Endothelial cell of umbilical vein (primary cell): ENCODE measurements at regions of chr12 and their contacts with region 1.

Region 1: GRCh38 chr12:1650260-1650977 is 21.4 kb downstream of the WNT5B start:
- DNase-seq: no peak
- H3K4me3 ChIP-seq: no peak overlapping the region
- H3K27ac ChIP-seq: no peak overlapping the region
- H3K4me1 ChIP-seq: no peaks in the 10 kb centered on the region
- H3K27me3 ChIP-seq: peaks cover 24 to 27% of the 10 kb centered on the region in 2 experiments
- CTCF ChIP-seq: no peak
- POLR2A ChIP-seq: no peak

Region 2: DNA sequence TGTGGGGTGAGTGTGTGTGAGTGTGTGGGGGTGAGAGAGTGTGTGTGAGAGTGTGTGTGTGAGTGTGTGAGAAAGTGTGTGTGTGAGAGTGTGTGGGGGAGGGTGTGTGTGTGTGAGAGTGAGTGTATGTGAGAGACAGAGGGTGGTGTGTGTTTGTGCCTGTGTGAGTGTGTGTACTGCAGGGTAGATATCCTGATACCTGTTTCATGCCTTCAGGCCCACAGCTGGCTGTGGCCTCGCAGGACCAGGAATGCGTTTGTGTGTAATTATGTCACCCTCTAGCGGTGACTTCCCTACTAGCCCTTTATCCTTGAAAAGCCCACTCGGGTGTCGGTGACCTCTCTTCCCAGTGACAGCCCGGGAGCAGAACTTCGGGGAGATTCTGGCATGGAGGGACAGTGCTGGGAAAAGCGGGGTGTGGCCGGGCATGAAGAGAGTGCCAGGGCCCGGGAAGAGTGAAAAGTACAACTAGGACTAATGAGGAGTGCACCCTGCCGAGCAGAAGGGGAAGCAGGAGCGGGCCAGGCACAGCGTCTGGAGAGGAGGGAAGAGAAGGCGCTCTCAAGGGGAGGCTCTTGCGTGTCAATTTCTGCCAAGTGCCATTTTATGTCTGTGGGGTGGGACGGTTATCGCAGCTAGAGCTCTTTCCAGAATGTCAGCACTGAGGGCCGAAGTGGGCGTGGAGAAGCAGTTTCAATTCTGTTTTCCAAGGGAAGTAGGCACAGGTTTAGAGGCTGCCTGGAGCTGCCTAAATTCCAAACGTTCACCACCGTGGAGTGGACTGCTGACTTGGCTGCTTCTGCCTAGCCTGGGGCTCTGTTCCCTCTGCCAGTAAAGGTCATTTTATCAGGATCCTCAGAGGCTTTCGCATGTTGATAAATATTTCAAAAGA is 45.0 kb before region 1 on chr12:
- CTCF ChIA-PET with region 1: no interaction called
- POLR2A ChIA-PET with region 1: no interaction called
- dilution Hi-C with region 1: no loop called
- intact Hi-C with region 1: no loop called
- DNase-seq: peak; percentile 81
- H3K4me3 ChIP-seq: peak overlapping the region in 2 of 3 experiments; percentile 27 to 28
- H3K27ac ChIP-seq: peak overlapping the region; percentile 39
- H3K4me1 ChIP-seq: peaks cover 9% of the 10 kb centered on the region
- H3K27me3 ChIP-seq: no peaks in the 10 kb centered on the region
- CTCF ChIP-seq: peak; percentile 73 to 85
- POLR2A ChIP-seq: no peak

Region 3: DNA sequence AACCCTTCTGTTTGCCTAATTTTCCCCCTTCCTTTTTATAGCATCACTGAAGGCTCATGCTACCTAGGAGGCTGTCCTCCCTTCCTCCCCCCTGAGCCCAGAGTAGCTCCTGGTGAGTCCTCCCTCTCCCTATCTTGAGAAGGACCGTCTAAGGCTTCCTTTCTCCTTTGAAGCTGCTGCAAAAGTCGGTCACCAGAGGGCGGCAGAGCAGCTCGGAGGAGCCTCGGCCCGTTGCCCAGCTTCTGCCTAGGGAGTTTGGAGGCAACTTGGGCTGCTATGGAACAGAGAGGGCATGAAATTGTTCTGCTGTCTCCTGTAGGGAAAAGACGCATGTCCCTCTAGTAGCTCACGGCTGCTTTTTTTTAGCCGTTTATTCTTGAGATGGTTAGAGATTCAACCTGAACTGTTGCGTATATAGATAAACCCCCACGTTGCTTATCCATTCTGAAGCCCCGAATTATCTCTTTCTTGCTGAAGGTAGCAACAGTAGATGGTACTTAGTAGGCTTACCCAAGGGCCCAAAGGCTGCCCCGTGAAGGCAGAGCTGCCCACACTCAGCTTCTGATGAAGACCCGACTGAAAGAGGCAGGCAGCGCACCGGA is 15.7 kb before region 1 on chr12:
- CTCF ChIA-PET with region 1: interaction called, 42 read pairs
- POLR2A ChIA-PET with region 1: interaction called, 3 read pairs
- dilution Hi-C with region 1: no loop called
- intact Hi-C with region 1: no loop called
- DNase-seq: peak; percentile 65
- H3K4me3 ChIP-seq: no peak overlapping the region
- H3K27ac ChIP-seq: no peak overlapping the region
- H3K4me1 ChIP-seq: peaks cover 5% of the 10 kb centered on the region
- H3K27me3 ChIP-seq: peaks cover 36 to 42% of the 10 kb centered on the region in 2 experiments
- CTCF ChIP-seq: peak; percentile 85 to 87
- POLR2A ChIP-seq: no peak

Region 4: DNA sequence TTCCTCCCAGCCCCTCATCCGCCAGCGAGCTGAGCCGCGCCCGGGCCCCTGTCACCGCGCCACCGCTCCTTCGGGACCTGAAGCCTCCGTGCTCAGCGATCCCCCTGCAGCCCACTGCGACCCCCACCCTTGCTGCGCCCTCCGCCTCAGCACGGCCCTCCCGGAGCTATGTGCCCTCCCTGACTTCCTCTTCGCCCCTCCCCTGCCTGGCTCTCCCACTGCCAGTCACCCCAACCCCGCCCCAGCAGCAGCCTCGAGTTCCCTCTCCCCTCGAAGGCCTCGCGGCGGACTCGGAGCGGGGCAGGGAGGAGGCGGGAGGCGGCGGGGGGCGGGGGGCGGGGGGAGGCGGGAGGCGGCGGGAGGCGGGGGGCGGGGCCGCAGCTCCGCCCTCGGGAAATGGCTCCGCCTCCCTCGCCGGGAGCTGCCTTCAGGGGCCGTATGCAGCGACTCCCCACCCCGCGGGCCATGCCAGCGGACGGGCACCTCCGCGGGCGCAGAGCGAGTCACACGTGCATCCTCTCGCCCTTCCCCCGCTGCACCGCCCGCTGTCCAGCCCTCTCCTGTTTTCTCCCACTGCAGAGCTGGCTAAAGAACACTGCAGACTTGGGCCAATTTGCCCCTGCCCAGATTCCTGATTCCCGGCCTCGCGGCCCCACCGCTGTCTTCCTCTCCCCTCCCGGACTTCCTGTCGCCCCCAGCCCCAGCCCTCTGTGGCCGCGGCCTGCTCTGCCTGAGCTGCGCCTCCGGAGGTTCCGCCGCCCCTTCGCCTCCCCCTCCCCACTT is 11.3 kb after region 1 on chr12:
- CTCF ChIA-PET with region 1: interaction called, 18 read pairs
- POLR2A ChIA-PET with region 1: no interaction called
- dilution Hi-C with region 1: no loop called
- intact Hi-C with region 1: no loop called
- DNase-seq: peak; percentile 90
- H3K4me3 ChIP-seq: peak overlapping the region in 1 of 3 experiments; percentile 37
- H3K27ac ChIP-seq: no peak overlapping the region
- H3K4me1 ChIP-seq: peaks cover 13% of the 10 kb centered on the region
- H3K27me3 ChIP-seq: no peaks in the 10 kb centered on the region
- CTCF ChIP-seq: no peak
- POLR2A ChIP-seq: no peak

Region 5: DNA sequence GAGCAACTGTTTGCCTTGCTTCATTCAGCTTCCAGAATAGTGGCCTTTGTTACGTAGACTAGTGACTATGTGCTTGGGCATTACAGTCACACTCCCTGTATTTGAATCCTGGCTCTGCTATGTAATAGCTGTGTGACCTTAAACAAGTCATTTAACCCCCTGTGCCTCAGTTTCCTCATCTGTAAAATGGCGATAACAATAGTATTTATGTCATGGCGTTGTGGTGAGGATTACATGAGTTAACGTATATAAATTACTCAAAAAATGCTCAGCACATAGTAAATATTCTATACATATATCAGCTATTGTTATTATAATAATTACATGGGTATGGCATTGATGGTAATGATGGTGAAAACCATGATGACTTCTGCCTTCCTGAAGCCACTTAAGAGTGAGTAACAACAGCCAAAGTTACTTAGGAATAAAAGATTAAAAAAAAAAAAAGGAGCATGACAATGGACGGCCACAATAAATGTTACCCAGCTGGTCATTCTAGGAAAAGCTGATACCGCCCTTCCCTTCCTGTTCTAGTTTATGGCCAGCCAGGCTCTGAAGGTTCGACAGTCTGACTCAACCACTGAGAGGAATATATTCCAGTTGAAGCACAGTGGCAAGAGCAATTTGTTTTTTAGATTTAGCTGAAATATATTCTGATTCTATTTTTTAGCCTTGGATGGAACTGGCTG is 30.5 kb after region 1 on chr12:
- CTCF ChIA-PET with region 1: interaction called, 18 read pairs
- POLR2A ChIA-PET with region 1: no interaction called
- dilution Hi-C with region 1: no loop called
- intact Hi-C with region 1: no loop called
- DNase-seq: peak; percentile 95
- H3K4me3 ChIP-seq: no peak overlapping the region
- H3K27ac ChIP-seq: peak overlapping the region; percentile 76
- H3K4me1 ChIP-seq: peaks cover 15% of the 10 kb centered on the region
- H3K27me3 ChIP-seq: peaks cover 0 to 2% of the 10 kb centered on the region in 2 experiments
- CTCF ChIP-seq: no peak
- POLR2A ChIP-seq: no peak

Region 6: DNA sequence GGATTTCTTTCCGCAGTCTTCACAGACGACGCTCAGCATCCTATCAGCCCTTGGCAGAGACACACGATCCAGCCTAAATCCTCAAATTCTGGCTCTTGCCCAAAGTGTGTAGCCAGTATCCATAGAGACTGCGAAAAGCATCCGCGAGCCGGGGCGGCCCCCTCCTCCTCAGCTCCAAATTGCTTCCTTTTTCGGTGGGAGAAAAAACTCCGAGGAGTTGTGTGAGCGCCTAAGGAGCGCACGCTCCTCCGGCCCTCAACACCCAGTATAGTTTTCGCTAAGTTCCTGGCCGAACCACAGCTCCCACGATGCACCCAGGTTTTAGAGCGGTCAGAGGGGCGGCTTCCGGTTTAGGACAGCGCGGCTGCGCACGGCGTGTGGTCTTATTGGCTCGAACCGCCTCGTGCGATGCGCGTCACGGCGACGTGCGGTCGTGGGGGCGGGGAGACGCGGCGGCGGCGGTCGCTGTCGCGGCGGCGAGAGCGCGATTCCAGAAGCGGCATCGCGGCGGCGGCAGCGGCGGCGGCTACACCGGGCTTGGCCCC is 40.2 kb after region 1 on chr12 and contains the start of gene ADIPOR2:
- CTCF ChIA-PET with region 1: interaction called, 14 read pairs
- POLR2A ChIA-PET with region 1: no interaction called
- dilution Hi-C with region 1: no loop called
- intact Hi-C with region 1: loop called (anchors 2 kb)
- DNase-seq: peak; percentile 94
- H3K4me3 ChIP-seq: peak within 1 kb of the TSS; percentile 72 to 95 (median 90)
- H3K27ac ChIP-seq: peak within 1 kb of the TSS; percentile 93
- H3K4me1 ChIP-seq: peaks cover 14% of the 10 kb centered on the region
- H3K27me3 ChIP-seq: no peaks in the 10 kb centered on the region
- CTCF ChIP-seq: no peak
- POLR2A ChIP-seq: peak; percentile 91
- total RNA-seq, gene ADIPOR2: 57.3 and 59.4 TPM in 2 replicates

Region 7: DNA sequence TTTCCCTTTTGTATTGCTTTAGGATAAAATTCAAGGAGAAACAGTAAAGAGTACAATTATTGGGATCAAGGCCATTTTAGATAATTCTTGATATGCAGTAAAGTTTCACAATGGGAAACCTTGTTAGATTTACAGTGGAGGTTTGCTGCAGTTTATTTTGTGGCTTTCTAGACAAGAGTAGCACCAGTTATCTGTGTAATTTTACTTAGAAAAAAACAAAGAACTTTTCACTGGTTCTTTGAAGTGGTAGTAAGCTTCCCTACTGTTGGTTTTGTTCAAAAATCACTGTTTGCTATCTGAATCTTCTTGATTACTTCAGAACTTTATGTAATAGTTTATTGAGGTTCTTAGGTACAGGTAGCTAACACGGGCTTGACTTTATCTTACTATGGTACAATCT is 82.5 kb after region 1 on chr12:
- CTCF ChIA-PET with region 1: no interaction called
- POLR2A ChIA-PET with region 1: no interaction called
- dilution Hi-C with region 1: no loop called
- intact Hi-C with region 1: no loop called
- DNase-seq: no peak
- H3K4me3 ChIP-seq: no peak overlapping the region
- H3K27ac ChIP-seq: no peak overlapping the region
- H3K4me1 ChIP-seq: no peaks in the 10 kb centered on the region
- H3K27me3 ChIP-seq: no peaks in the 10 kb centered on the region
- CTCF ChIP-seq: no peak
- POLR2A ChIP-seq: no peak

Region 8: GRCh38 chr12:1776170-1776948 is 125.9 kb after region 1 on chr12:
- CTCF ChIA-PET with region 1: interaction called, 13 read pairs
- POLR2A ChIA-PET with region 1: no interaction called
- dilution Hi-C with region 1: no loop called
- intact Hi-C with region 1: no loop called
- DNase-seq: no peak
- H3K4me3 ChIP-seq: no peak overlapping the region
- H3K27ac ChIP-seq: no peak overlapping the region
- H3K4me1 ChIP-seq: peaks cover 9% of the 10 kb centered on the region
- H3K27me3 ChIP-seq: no peaks in the 10 kb centered on the region
- CTCF ChIP-seq: no peak
- POLR2A ChIP-seq: no peak

Region 9: DNA sequence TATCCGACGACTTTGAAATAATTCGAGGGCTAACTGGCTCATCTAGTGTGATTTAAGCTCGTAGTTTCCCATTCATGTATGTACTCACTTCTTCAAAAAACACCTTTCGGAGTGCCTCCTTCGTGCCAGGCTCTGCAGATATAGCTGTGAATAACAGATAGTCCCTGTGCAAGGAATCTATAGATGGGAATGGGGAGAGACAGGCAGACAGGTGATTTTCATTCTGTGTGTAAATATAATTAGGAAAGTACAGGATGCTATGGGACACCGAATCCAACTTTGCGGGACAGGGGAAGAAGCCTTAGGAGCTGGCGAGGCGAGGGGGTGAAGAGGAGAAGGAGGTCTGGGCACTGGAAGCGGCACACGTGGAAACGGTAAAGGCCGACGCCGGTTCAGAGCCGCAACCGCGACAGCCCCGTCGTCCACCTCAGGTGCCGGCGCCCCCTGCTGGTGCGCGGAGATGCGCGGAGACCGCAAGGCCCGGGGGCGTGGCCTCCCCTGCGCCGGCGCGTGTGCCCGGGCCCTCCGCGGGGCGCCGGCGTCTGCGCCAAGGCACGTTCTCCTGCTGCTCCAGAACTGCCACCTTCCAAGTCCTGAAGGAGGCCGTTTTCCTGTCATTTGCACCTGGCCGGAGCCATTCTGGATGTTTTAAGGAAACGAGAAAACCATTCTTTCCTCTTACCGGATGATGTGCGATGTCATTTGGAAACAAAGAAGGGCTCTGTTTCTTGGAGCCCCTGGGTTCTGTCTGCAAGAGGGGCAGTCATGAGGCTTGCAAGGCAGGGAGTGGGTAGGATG is 384.4 kb after region 1 on chr12:
- CTCF ChIA-PET with region 1: no interaction called
- POLR2A ChIA-PET with region 1: no interaction called
- dilution Hi-C with region 1: no loop called
- intact Hi-C with region 1: loop called (anchors 5 kb)
- DNase-seq: peak; percentile 69
- H3K4me3 ChIP-seq: no peak overlapping the region
- H3K27ac ChIP-seq: no peak overlapping the region
- H3K4me1 ChIP-seq: peaks cover 2% of the 10 kb centered on the region
- H3K27me3 ChIP-seq: peaks cover 12 to 24% of the 10 kb centered on the region in 2 experiments
- CTCF ChIP-seq: peak; percentile 90 to 94
- POLR2A ChIP-seq: no peak